Dendritic cell treated with granulocyte-macrophage colony-stimulating factor and Interleukin-4, amounts not matched to agents 40 ng/mL and 50 ng/mL, for 4 days (primary cell): ENCODE measurements at regions of chr21 and their contacts with region 1.

Region 1: DNA sequence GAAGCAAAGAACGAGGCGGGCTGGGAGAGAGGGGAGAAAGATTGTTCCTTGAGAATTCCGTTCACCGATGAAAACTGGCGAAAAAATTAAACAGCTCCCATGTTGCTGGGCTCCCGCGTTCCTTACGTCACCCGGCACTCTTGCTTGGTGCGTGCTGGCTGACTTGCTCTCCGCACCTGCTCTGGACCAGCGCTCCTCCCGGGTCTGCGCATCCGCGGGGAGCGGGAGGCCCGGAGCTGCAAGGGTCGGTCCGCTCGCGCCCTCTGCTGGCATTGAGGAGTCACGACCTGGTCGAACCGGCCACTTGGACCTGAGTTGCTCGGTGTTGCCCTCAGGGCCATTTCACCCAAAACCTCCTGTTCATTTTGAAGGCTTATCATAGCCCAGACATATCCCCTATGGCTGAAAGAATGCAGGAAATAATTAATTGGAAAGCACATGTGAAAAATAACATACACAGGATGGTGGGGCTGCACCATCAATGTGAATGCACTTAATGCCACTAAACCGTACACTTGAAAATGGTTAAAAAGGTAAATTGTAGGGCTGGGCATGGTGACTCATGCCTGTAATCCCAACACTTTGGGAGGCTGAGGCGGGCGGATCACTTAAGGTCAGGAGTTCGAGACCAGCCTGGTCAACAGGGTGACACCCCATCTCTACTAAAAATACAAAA is 98.9 kb upstream of the BACE2 start:
- H3K4me3 Mint-ChIP-seq: peak overlapping the region; percentile 44
- H3K27ac Mint-ChIP-seq: no peak overlapping the region
- H3K4me1 Mint-ChIP-seq: peaks cover 10% of the 10 kb centered on the region
- H3K27me3 Mint-ChIP-seq: peaks cover 21% of the 10 kb centered on the region

Region 2: DNA sequence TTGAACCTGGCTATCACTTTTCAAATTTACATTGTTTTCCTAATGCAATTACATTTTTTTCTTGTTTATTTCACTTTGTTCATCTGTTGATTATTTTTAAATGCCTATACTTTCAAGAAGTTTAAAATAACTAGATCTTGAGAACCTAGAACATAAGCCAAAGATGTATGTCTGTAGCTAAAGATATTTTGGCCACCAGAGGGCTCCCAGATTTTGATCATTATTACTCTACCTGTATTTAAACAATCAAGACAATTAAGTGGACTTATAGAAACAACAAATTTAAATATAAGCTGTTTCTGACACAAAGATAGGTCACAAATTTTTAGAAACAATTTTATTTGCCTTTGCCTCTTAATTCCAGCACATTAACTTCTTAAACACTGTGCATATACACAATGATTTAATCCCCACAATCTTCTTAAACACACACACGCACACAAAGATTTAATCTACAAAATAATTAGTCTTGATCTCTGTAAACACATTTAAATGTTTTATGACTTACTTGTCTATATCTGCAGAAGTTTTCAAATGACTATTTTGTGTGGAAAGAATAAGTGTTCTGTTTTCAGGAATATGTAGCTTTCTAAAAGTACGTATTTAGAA is 602.1 kb before region 1 on chr21:
- intact Hi-C with region 1: loop called (anchors 2 kb)
- H3K4me3 Mint-ChIP-seq: no peak overlapping the region
- H3K27ac Mint-ChIP-seq: no peak overlapping the region
- H3K4me1 Mint-ChIP-seq: peaks cover 7% of the 10 kb centered on the region
- H3K27me3 Mint-ChIP-seq: peaks cover 5% of the 10 kb centered on the region

Region 3: DNA sequence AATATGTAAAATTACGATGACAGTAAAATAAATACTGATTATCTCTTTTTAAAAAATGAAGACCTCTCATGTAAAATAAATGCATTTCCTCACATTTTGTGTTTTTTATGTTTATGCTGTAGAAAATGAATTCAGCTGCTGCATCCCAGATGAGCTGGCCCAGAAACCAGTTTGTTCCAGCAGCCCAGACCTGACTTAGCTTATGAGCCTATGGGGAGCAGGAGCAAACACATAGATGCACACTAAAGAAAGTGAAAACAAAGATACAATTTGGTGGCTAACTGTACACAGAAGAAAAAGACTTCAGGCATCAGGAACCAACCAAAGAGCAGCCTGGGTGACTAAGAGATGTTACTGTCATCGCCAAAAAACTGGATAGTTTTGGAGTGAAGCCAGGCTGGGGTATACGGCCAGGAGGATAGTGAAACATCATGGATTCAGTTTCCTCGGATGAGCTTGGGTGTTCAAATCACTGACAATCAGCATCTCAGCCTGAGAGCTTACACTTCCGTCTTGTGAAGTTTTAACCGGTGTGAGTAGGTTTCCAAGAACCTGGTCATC is 15.0 kb before region 1 on chr21:
- intact Hi-C with region 1: loop called (anchors 1 kb)
- H3K4me3 Mint-ChIP-seq: no peak overlapping the region
- H3K27ac Mint-ChIP-seq: no peak overlapping the region
- H3K4me1 Mint-ChIP-seq: no peaks in the 10 kb centered on the region
- H3K27me3 Mint-ChIP-seq: no peaks in the 10 kb centered on the region

Region 4: DNA sequence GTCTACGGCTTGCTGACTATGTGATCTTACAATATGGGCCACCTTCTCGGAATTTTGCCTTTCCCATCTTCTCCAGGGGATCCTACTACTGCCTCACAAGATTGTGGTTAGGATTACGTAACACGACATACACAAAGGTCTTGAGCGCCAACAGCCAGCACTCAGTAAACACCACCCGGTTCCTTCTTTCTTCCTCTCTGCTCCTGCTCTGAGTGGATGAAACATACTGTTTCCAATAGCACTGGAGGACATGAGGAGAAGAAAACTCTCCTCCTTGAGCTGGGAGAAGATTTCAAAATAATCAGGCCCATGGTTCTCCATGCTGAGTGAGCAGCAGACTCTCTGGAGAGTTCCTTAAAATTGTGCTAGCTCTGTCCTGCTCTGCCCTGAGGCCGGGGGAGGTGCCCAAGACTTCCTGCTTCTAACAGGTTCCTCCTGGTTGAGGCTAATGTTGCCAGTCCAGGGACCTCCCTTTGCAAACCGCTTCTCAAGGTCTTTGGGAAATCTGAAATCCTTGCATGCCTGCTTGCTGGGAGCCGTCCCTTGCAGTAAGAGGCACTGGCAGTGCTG is 327.5 kb after region 1 on chr21:
- intact Hi-C with region 1: no loop called
- H3K4me3 Mint-ChIP-seq: no peak overlapping the region
- H3K27ac Mint-ChIP-seq: peak overlapping the region; percentile 81
- H3K4me1 Mint-ChIP-seq: peaks cover 47% of the 10 kb centered on the region
- H3K27me3 Mint-ChIP-seq: no peaks in the 10 kb centered on the region